ENCODE measurements at regions of chr17 and their contacts with region 1.

Region 1: GRCh38 chr17:30913955-30914354 is 7.8 kb upstream of the ADAP2 start:
- DNase-seq: no peak
- CTCF ChIP-seq: peak; percentile 2

Region 2: GRCh38 chr17:30930495-30930894 is 16.5 kb after region 1 on chr17:
- CTCF ChIA-PET with region 1: interaction called, 13 read pairs
- POLR2A ChIA-PET with region 1: no interaction called
- DNase-seq: no peak
- CTCF ChIP-seq: no peak

Region 3: GRCh38 chr17:30970831-30971567 is 57.0 kb after region 1 on chr17 and contains the start of gene RNF135:
- CTCF ChIA-PET with region 1: no interaction called
- POLR2A ChIA-PET with region 1: no interaction called
- DNase-seq: peak; percentile 83
- CTCF ChIP-seq: no peak

Measured in GM10248 (cell line).